Activated B cell treated with CpG ODN at 0.5 μM for 24 hours (primary cell): ENCODE measurements at regions of chr19 and their contacts with region 1.

Region 1: DNA sequence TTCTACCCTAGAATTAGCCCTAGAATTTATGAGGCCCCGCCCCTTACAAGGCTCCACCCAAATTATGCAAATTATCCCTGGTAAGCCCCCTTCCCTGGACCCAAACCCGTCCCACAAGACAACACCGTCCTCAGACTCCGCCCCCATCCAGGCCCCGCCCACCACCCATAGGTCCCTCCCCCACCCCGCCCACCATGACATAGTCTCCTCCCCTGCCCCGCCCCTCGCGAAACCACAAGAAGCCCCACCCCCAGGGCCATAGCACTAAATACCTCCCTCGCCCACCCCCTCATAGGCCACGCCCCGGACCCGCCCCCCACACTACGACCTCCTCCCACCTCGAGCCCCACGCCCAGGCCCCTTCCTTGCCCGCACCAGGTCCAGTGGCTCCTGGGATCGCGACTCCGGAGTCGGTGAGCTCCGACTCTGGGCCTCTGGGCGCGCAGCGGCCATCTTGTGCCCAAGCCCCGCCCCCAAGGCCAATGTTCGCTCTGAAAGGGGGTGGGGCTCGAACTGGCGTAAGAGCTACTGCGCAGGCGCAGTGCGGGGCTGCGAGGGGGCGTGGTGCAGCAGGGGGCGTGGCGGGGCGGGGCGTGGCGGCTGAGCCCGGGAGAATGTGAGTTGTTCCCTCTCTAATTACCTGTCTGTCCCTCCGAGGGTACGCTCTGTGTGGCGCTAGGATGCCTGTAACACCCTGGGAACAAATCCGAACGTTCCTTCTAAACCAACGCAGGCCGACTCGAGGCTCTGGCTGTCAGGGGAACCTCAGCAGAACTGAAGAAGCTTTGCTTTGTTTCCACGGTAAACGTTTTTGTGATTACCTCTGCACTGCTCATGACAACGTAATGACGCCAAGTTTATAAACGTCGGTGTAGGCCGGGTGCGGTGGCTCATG is at the start of gene ZNF784:
- DNase-seq: peak; percentile 93
- ATAC-seq: peak; percentile 85
- H3K4me3 Mint-ChIP-seq: peak within 1 kb of the TSS; percentile 94
- H3K27ac Mint-ChIP-seq: peak within 1 kb of the TSS; percentile 97
- H3K4me1 Mint-ChIP-seq: peaks cover 17% of the 10 kb centered on the region
- H3K27me3 Mint-ChIP-seq: no peaks in the 10 kb centered on the region
- CTCF ChIP-seq: no peak
- total RNA-seq, gene ZNF784: 8.7 and 8.9 TPM in 2 replicates

Region 2: GRCh38 chr19:55385740-55386529 is 238.4 kb before region 1 on chr19 and contains the start of gene RPL28:
- CTCF ChIA-PET with region 1: no interaction called
- POLR2A ChIA-PET with region 1: no interaction called
- intact Hi-C with region 1: loop called (anchors 2 kb)
- DNase-seq: peak; percentile 95
- ATAC-seq: peak; percentile 79
- H3K4me3 Mint-ChIP-seq: peak within 1 kb of the TSS; percentile 100
- H3K27ac Mint-ChIP-seq: peak within 1 kb of the TSS; percentile 99
- H3K4me1 Mint-ChIP-seq: peaks cover 67% of the 10 kb centered on the region
- H3K27me3 Mint-ChIP-seq: no peaks in the 10 kb centered on the region
- CTCF ChIP-seq: no peak
- total RNA-seq, gene RPL28: 3,790 and 4,042 TPM in 2 replicates

Region 3: DNA sequence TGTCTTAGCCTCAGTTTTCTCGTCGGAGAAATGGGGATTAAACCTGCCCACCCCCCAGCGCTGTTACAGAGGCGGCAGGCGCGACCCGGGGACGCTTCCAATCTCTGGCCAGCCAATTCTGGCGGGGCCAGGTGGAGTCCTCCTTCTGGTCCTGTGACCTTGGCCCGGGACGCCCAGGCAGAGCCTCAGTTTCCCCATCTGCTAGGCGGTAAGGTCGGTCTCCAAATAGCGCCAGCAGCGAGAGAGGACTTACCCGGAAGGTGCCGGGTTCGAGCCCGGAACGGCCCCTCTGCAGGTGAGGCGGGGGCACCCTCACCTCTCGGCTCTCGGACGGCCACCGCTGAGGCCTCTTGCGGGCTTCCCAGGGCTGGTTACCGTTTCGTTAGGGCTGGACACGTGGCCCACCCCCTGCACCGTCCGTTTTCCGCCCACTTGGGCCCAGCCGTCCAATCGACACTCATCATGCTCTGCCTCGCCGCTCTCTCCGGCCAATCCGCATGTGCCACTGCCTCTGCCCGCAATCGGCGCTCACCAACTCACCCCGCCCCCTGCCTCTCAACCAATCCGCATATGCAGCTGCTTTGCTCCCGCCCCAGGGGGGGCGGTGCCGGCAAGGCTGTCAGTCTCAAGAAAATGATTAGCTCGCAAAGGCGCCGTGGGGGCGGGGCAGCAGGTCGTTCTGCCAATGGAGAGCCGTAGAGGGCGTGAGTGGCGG is 162.9 kb before region 1 on chr19 and contains the start of gene ISOC2:
- CTCF ChIA-PET with region 1: no interaction called
- POLR2A ChIA-PET with region 1: no interaction called
- intact Hi-C with region 1: loop called (anchors 1 kb)
- DNase-seq: peak; percentile 100
- ATAC-seq: peak; percentile 96
- H3K4me3 Mint-ChIP-seq: peak within 1 kb of the TSS; percentile 89
- H3K27ac Mint-ChIP-seq: peak within 1 kb of the TSS; percentile 82
- H3K4me1 Mint-ChIP-seq: peaks cover 22% of the 10 kb centered on the region
- H3K27me3 Mint-ChIP-seq: no peaks in the 10 kb centered on the region
- CTCF ChIP-seq: no peak
- total RNA-seq, gene ISOC2: 28.7 and 29.0 TPM in 2 replicates

Region 4: GRCh38 chr19:55586976-55587668 is 37.2 kb before region 1 on chr19:
- CTCF ChIA-PET with region 1: no interaction called
- POLR2A ChIA-PET with region 1: interaction called, 4 read pairs
- intact Hi-C with region 1: loop called (anchors 1 kb)
- DNase-seq: peak; percentile 89
- ATAC-seq: peak; percentile 96
- H3K4me3 Mint-ChIP-seq: peak overlapping the region; percentile 85
- H3K27ac Mint-ChIP-seq: peak overlapping the region; percentile 72
- H3K4me1 Mint-ChIP-seq: peaks cover 29% of the 10 kb centered on the region
- H3K27me3 Mint-ChIP-seq: no peaks in the 10 kb centered on the region
- CTCF ChIP-seq: no peak

Region 5: DNA sequence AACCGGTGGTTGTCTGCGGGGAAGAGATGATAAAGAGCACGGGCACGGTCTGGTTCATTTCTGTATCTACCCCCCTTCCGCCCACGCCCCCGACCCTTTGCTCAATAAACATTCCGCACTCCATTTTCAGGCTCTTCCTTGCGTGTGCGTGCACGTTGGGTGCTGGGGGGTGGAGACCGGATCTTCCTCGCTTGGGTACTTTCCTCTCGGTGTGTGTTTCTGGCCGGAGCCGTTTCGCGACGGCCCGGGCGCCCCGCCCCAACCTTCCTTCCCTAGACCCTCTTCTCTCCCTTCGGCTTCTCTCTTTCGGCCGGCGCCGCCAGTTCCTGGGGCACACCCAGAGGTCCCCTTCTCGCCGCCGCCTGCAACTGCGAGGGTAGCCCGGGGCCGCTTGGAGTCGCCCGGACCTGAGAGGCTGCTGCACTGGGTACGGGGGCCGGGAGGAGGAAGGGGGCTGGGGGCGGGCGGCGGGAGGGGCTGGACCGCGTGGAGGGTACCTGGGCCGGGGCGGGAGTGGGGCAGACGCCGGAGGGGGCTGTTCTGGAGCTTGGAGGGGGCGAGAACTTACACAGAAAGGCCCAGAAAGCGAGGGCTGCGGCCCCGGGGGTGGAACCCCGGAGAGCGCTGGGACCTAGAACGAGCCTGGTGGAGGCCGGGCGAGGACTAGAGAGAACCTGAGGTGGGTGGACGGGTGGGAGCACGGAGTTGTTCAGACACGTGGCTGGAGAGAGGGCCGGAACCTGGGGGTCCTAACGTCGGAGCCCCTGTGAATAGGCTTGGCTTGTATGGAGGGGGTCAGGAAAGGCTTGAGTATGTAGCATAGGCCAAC is 19.2 kb after region 1 on chr19 and contains the start of gene ZNF581:
- CTCF ChIA-PET with region 1: no interaction called
- POLR2A ChIA-PET with region 1: interaction called, 16 read pairs
- intact Hi-C with region 1: no loop called
- DNase-seq: peak; percentile 84
- ATAC-seq: peak; percentile 51
- H3K4me3 Mint-ChIP-seq: peak within 1 kb of the TSS; percentile 86
- H3K27ac Mint-ChIP-seq: peak within 1 kb of the TSS; percentile 96
- H3K4me1 Mint-ChIP-seq: peaks cover 66% of the 10 kb centered on the region
- H3K27me3 Mint-ChIP-seq: no peaks in the 10 kb centered on the region
- CTCF ChIP-seq: no peak
- total RNA-seq, gene ZNF581: 42.7 and 46.5 TPM in 2 replicates